Activated CD4-positive, alpha-beta memory T cell treated with anti-CD3 and anti-CD28 coated beads for 36 hours (primary cell): ENCODE measurements at regions of chr3 and their contacts with region 1.

Region 1: DNA sequence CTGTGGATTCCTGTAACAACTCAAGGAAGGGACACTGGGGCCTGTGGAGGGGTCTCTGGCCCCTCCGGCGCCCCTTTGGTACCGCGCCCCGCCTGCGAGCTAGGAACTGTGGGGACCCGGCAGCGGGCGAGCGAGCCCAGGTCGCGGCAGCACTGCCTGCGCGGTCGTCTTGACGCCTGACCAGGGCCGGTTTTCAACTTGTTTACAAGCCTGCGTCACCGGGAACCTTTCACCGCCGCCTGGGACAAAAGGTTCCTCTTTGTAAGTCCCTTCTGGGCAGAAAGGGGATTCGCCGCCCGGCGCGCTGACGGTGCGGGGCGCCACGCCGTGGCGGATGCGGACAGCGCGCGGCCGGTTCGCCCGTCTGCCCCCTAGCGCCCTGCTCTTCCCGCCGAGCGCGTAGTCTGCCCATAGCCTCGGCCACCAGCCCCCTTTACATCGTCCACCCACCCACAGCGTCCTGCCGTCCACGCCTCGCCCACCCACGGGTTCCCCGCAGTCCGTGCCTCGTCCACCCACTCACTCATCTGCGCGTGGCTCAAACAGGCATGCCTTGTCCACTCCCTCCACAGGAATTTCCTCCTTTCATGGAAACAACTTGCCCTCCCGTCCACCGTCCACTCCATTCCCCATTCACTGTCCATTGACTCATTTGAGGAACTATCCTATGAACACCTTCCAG is 5.5 kb upstream of the CFAP100 start:
- DNase-seq: peak; percentile 58
- H3K4me3 Mint-ChIP-seq: no peak overlapping the region
- H3K27ac Mint-ChIP-seq: no peak overlapping the region
- H3K4me1 Mint-ChIP-seq: peaks cover 3% of the 10 kb centered on the region
- H3K27me3 Mint-ChIP-seq: peaks cover 52% of the 10 kb centered on the region

Region 2: GRCh38 chr3:126245811-126246727 is 143.2 kb before region 1 on chr3:
- CTCF ChIA-PET with region 1: no interaction called
- POLR2A ChIA-PET with region 1: no interaction called
- intact Hi-C with region 1: loop called (anchors 1 kb)
- DNase-seq: peak; percentile 44
- H3K4me3 Mint-ChIP-seq: no peak overlapping the region
- H3K27ac Mint-ChIP-seq: no peak overlapping the region
- H3K4me1 Mint-ChIP-seq: no peaks in the 10 kb centered on the region
- H3K27me3 Mint-ChIP-seq: no peaks in the 10 kb centered on the region

Region 3: GRCh38 chr3:126692845-126693244 is 303.6 kb after region 1 on chr3:
- CTCF ChIA-PET with region 1: no interaction called
- POLR2A ChIA-PET with region 1: no interaction called
- intact Hi-C with region 1: no loop called
- DNase-seq: no peak
- H3K4me3 Mint-ChIP-seq: no peak overlapping the region
- H3K27ac Mint-ChIP-seq: no peak overlapping the region
- H3K4me1 Mint-ChIP-seq: no peaks in the 10 kb centered on the region
- H3K27me3 Mint-ChIP-seq: peaks cover 38% of the 10 kb centered on the region